ENCODE measurements at regions of chr3 and their contacts with region 1.

Region 1: GRCh38 chr3:50611464-50612233 is at the start of gene CISH:
- DNase-seq: peak; percentile 86
- H3K4me3 ChIP-seq: peak within 1 kb of the TSS; percentile 81
- H3K27ac ChIP-seq: peak within 1 kb of the TSS; percentile 39
- H3K27me3 ChIP-seq: no peaks in the 10 kb centered on the region
- CTCF ChIP-seq: peak; percentile 61
- polyA plus RNA-seq, gene CISH: 2.4 and 4.1 TPM in 2 replicates

Region 2: DNA sequence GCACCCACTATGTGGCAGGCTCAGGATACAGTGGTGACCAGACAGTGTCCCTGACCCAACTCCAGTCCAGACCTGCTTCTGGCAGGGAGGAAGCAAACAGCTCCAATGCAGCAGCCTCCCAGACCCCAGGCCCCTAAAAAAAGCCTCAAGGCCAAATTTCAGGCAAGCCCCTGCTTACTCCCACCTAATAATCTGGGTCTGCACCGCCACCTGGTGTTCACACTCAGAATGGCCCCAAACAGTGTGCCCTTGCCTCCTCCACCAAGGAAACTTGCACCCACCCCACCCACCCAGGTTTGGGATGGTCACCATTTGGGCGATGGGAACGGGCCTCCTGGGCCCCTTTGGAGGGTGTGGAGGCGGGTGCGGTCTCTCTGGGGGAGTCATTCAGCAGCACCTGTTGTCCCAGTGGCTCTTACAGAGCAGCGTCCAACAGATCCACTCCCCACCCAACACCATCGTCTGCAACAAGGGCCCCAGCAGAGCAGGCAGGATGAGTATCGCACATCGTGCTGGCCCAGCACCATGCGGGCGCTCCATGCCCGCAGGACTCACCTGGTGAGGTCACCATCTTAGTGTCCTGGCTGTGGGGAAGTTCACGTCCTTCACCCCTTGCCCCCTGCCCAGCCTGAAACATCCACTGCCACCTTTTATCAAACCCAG is 61.4 kb before region 1 on chr3:
- CTCF ChIA-PET with region 1: interaction called, 13 read pairs
- POLR2A ChIA-PET with region 1: no interaction called
- DNase-seq: no peak
- H3K4me3 ChIP-seq: no peak overlapping the region
- H3K27ac ChIP-seq: no peak overlapping the region
- H3K27me3 ChIP-seq: peaks cover 14% of the 10 kb centered on the region
- CTCF ChIP-seq: peak; percentile 73

Region 3: DNA sequence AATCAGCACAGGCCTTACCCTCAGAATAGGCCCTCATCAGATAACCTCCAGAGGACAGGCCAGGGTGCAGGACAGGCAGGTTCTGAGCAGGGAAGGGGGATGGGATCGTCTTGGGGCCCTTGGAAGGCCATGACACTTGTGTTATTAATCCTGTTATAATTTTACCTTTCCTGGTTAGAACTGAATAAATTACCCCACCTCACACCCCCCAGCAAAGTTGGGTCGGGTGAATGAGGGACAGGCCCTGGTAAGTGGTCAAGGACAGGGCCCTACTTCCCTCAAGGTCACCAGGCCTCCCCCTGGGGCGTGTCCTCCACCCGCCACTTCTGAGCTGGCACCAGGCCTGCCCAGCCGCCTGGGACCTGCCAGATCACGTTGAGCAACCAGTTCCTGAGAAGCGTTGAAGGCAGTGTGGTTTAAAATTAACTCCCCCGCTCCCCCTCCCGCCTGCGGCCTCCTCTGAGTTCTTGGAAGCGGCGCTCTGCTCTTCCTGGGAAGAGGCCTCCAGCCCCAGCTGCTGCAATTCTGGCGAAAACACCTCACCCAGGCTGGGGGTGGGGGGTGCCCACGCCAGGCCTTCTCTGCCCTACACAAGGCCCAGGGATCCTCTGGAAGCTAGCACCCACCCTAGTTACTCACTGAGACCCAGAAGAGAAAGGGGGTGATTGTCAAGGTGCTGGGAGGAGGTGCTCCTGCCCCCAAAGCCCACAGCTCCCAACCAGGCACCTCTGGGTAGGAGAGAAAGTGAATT is 10.6 kb before region 1 on chr3:
- CTCF ChIA-PET with region 1: interaction called, 52 read pairs
- POLR2A ChIA-PET with region 1: interaction called, 61 read pairs
- DNase-seq: peak; percentile 89
- H3K4me3 ChIP-seq: peak overlapping the region; percentile 34
- H3K27ac ChIP-seq: peak overlapping the region; percentile 100
- H3K27me3 ChIP-seq: no peaks in the 10 kb centered on the region
- CTCF ChIP-seq: no peak

Region 4: GRCh38 chr3:50947419-50947818 is 335.8 kb after region 1 on chr3:
- CTCF ChIA-PET with region 1: no interaction called
- POLR2A ChIA-PET with region 1: no interaction called
- DNase-seq: no peak
- H3K4me3 ChIP-seq: no peak overlapping the region
- H3K27ac ChIP-seq: no peak overlapping the region
- H3K27me3 ChIP-seq: no peaks in the 10 kb centered on the region
- CTCF ChIP-seq: no peak

Region 5: DNA sequence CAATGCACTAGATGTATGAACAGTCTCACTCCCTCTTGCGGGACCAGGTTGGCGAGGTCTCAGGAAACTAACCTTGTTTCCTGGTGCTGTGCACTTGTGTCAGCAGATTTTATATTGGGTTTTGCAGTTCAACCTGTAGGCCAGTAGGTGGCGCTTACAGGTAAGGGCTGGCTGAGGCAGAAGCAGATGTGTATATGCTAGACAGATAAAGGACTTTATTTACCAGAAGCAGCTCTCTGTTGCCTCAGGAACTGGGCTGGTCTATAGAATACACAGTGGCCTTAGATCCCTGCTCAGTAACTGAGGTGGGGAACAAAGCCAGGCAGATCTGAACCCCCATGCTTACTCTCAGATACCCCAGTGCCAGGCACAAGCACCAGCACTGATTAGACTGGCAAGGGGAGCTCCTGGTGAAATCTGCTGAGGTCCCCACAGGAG is 359.9 kb after region 1 on chr3:
- CTCF ChIA-PET with region 1: interaction called, 10 read pairs
- POLR2A ChIA-PET with region 1: no interaction called
- DNase-seq: peak; percentile 13
- H3K4me3 ChIP-seq: no peak overlapping the region
- H3K27ac ChIP-seq: no peak overlapping the region
- H3K27me3 ChIP-seq: no peaks in the 10 kb centered on the region
- CTCF ChIP-seq: peak; percentile 87

Region 6: DNA sequence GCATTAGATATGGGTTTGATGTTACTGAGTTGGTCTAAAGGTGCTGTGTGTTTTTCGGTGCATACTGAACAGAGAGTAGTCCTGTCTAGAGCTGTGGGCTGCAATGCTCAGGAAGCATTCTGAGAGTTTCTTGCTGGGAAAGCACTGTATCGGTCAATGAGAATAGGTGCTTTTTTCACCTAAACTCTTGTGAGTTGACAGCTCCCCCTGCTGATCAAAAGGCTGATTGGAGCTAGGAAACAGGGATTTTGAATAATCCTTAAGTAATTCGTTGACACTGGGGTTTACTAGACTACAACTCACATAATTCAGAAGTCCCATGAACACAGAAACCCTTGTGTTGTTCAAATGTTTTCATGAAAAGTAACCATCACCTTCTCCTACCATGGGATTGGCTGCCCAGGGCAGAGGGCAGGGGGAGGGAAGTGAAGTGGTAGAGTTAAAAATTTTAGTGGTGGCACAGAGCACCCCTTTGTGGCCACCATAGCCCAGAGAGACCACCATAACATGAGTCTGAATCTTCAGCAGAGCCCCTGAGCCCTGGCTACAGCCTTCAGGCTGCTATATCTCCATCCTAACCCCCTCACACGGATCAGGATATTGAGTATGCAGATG is 760.4 kb after region 1 on chr3:
- CTCF ChIA-PET with region 1: interaction called, 37 read pairs
- POLR2A ChIA-PET with region 1: no interaction called
- DNase-seq: peak; percentile 43
- H3K4me3 ChIP-seq: no peak overlapping the region
- H3K27ac ChIP-seq: no peak overlapping the region
- H3K27me3 ChIP-seq: peaks cover 5% of the 10 kb centered on the region
- CTCF ChIP-seq: peak; percentile 83

Region 7: DNA sequence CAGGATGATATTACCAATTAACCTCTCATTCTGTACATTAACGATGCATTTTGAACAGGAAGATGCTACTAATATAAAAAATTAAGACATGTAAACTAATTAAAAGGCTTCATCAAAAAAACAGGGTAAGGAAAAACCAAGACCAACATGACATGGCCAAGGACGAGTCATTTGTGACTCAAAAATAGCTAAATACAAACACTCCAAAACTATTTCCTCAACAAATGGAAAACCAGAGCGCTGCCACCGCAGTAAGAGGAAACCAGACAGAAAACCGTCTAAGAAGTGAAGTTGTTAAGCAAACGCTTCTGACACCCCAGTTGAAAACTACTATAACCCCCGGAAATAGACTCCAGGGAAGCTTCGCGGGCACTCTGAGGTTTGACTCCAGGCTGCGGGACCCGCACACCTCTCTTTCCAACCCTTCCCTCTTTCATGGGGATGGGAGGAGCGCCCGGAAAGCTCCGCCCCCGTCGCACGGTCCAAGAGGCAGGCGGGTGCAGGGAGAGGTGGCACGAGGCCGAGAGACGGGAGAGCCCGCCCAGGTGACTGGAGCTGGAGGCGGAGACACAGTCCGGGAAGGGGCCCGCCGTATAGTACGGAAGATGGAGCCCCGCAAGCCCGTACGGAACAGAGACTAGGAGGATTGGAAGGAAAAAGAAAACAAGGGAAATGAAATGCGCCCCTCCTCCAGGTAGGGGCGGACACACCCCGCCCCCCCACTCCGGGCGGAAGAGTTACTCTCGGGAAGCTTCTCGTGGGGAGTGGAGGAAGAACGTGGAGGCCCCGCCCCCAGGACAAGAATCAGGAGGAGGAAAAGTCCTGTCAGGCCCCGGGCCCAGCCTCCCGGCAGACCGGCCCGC is 887.5 kb after region 1 on chr3:
- CTCF ChIA-PET with region 1: interaction called, 10 read pairs
- POLR2A ChIA-PET with region 1: no interaction called
- DNase-seq: peak; percentile 81
- H3K4me3 ChIP-seq: peak overlapping the region; percentile 78
- H3K27ac ChIP-seq: peak overlapping the region; percentile 88
- H3K27me3 ChIP-seq: no peaks in the 10 kb centered on the region
- CTCF ChIP-seq: no peak

Measured in AG04450 (cell line).